ENCODE measurements at regions of chr17 and their contacts with region 1.

Region 1: GRCh38 chr17:77247048-77247541 is 106.3 kb downstream of the SEC14L1 start:
- DNase-seq: peak; percentile 89
- ATAC-seq: peak; percentile 95 to 96

Region 2: DNA sequence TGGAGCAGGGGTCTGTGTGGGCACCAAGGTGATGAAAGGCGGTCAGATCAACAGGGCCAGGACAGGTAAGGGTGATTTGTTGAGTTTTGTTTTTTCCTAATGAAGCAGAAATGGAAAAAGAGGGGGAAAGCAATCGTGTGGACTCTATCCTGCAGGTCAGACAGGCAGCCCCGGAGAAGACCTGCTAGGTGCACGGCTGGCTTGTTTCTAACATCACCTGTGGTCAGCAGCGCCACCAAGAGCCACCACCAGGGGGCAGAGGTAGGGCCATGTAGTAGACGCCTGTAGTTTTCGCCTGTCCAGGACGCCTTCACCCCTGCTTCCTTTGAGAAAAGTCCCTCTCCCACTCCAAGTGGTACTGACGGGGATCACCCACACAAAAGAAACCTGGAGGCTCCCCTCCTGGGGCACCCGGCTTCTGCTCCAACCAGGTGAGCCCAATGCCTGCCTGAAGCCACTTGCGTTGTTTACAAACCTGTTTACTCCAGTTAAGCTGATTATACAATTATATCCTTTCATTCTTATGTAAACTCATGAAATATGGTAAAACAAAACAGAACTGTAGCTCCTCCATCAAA is 160.6 kb before region 1 on chr17:
- intact Hi-C with region 1: loop called (anchors 1 to 2 kb)
- DNase-seq: peak; percentile 89
- ATAC-seq: peak; percentile 45 to 67

Region 3: DNA sequence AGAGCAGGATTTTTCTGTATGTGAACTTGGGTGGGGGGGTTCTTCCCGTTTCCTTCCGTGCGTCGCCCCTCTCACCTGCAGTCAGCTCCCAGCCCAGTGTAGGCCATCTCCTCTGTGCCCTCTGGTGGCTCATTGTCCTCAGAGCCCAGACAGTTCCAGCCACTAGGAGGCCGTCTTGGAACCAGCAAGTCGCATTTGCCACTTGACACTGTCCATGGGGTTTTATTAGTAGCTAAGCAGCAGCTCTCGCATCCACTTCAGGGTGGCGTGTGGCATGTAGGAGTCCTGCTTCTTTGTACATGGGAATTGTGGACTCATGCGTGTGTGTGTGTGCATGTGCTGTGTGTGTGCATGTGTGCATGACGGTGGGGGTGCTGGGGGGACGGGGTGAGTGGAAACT is 32.4 kb before region 1 on chr17:
- intact Hi-C with region 1: loop called in 1 of 2 experiments (anchors 5 kb)
- DNase-seq: no peak
- ATAC-seq: peak; percentile 53 to 60